HEK293T (cell line): ENCODE measurements at regions of chr2 and their contacts with region 1.

Region 1: GRCh38 chr2:202376460-202377206 is 506 bp downstream of the BMPR2 start:
- DNase-seq: no peak

Region 2: GRCh38 chr2:202221873-202222272 is 154.8 kb before region 1 on chr2:
- CTCF ChIA-PET with region 1: interaction called, 12 read pairs
- POLR2A ChIA-PET with region 1: no interaction called
- DNase-seq: no peak